Activated B cell treated with CpG ODN at 0.5 μM for 24 hours (primary cell): ENCODE measurements at regions of chr2 and their contacts with region 1.

Region 1: DNA sequence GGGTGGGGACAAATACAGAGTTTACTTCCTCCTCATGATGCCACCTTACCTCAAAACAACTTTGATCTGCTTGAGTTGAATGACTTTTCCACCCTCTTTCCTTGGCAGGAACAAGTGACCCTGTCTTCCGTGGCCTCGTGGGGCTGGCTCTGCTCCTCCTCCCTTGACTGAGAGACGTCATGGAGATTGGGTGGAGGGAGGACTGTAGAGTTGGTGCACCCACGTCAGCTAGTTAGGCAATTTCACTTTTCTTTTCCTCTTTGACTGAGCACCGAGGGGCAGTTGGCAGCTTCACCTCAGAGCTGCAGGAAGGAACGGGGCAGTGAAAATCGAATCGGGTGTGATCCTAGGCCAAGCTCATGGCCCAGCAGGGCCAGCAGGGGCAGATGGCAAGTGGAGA is at the start of gene SP140:
- DNase-seq: peak; percentile 55
- ATAC-seq: peak; percentile 74
- H3K4me3 Mint-ChIP-seq: peak within 1 kb of the TSS; percentile 92
- H3K27ac Mint-ChIP-seq: peak within 1 kb of the TSS; percentile 98
- H3K4me1 Mint-ChIP-seq: peaks cover 86% of the 10 kb centered on the region
- H3K27me3 Mint-ChIP-seq: no peaks in the 10 kb centered on the region
- CTCF ChIP-seq: no peak
- total RNA-seq, gene SP140: 295 and 330 TPM in 2 replicates

Region 2: DNA sequence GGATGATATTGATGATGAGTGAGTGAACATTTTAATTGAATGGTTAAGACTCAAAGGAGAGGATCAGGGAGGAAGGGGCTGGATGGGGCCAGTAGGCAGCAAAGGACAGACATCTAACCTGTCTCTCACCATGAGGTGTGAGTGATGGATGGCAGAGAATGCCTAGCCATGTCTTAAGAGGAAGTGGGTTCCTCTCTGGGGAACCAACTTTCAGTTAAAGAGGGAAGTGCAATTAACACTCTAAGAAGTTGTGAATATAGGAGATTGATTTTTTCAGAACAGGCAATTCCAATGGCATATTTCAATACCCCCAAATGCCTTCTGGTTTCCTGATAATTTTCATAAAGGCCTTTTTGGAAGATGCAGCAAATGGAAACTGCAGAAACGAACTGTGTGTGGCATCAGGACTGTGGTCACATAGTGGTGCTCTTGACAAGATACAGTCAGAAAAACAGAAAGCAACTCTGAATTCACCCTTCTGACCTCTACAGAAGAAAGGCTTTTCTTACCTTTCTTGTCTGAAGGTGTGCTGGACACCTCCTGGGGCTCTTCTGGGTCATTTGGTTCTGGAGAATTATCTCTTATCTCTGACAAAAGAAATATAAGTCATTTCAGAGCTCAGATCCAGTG is 15.9 kb before region 1 on chr2:
- CTCF ChIA-PET with region 1: interaction called, 17 read pairs
- POLR2A ChIA-PET with region 1: interaction called, 268 read pairs
- intact Hi-C with region 1: loop called (anchors 1 kb)
- DNase-seq: no peak
- ATAC-seq: peak; percentile 85
- H3K4me3 Mint-ChIP-seq: no peak overlapping the region
- H3K27ac Mint-ChIP-seq: no peak overlapping the region
- H3K4me1 Mint-ChIP-seq: peaks cover 37% of the 10 kb centered on the region
- H3K27me3 Mint-ChIP-seq: no peaks in the 10 kb centered on the region
- CTCF ChIP-seq: no peak

Region 3: GRCh38 chr2:230262246-230262645 is 36.8 kb after region 1 on chr2:
- CTCF ChIA-PET with region 1: no interaction called
- POLR2A ChIA-PET with region 1: interaction called, 38 read pairs
- intact Hi-C with region 1: loop called (anchors 1 kb)
- DNase-seq: no peak
- ATAC-seq: no peak
- H3K4me3 Mint-ChIP-seq: peak overlapping the region; percentile 39
- H3K27ac Mint-ChIP-seq: peak overlapping the region; percentile 81
- H3K4me1 Mint-ChIP-seq: peaks cover 92% of the 10 kb centered on the region
- H3K27me3 Mint-ChIP-seq: no peaks in the 10 kb centered on the region
- CTCF ChIP-seq: no peak

Region 4: DNA sequence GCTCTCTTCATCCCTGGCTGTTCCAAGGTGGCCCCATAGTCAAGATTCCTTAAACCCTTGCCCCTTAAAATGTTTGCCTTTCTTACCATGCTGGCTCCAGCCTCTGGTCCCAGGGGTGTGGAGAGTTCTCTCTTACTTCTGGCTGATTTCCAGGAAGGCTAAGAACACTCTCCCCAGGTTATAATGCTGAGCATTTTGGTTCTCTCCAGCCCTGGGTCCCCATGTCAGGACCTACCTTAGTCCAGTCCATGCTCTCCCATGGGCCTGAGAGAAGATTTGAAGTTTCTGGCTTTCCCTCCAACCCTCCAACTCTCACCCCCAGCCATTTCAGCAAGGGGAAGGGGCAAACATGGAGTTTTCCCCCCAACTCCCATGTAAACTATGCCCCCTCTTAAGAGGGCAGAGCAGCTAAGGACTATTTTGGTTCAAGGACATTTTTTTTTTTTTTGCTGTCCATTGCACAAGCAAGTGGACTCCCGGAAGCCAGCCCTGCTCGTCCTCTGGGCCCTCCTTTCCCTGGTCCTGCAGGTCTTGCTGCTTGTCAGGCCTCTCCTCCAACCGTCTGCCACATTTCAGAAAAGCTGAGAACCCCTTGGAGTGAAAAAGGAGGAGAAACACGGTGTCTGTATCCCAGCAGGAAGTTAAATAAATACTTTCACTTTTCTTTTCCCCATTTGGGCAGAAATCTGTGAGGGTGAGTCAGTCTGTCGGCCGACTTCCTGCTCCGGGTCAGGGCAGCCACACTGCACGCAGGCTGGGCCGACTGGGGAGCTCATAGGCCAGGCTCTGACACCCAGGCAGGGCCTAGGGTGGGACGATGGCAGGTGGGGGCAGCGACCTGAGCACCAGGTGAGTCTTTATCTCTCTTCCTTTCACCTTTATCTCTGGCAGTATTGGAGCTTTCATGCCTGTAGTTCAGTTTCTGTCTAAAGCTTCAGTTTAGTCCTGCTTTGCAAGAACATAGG is 101.2 kb after region 1 on chr2 and contains the start of gene SP140L:
- CTCF ChIA-PET with region 1: no interaction called
- POLR2A ChIA-PET with region 1: interaction called, 20 read pairs
- intact Hi-C with region 1: no loop called
- DNase-seq: peak; percentile 60
- ATAC-seq: peak; percentile 95
- H3K4me3 Mint-ChIP-seq: peak within 1 kb of the TSS; percentile 96
- H3K27ac Mint-ChIP-seq: peak within 1 kb of the TSS; percentile 99
- H3K4me1 Mint-ChIP-seq: peaks cover 79% of the 10 kb centered on the region
- H3K27me3 Mint-ChIP-seq: no peaks in the 10 kb centered on the region
- CTCF ChIP-seq: no peak
- total RNA-seq, gene SP140L: 106 and 112 TPM in 2 replicates

Region 5: DNA sequence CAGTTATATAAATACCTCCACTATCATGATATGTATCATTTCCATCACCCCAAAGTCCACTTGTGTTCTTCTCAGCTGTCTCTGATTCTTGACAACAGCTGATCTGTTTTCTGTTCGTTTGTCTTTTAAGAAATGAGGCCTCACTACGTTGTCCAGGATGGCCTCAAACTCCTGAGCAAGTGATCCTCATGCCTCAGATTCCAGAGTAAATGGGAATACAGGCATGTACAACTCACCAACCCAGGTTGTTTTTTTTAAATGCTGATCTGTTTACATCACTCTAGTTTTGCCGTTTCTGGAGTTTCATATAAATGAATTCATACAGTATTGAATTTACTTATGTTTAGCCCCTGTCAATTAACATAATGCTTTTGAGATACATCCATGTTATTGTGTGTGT is 151.6 kb after region 1 on chr2:
- CTCF ChIA-PET with region 1: no interaction called
- POLR2A ChIA-PET with region 1: no interaction called
- intact Hi-C with region 1: no loop called
- DNase-seq: no peak
- ATAC-seq: no peak
- H3K4me3 Mint-ChIP-seq: no peak overlapping the region
- H3K27ac Mint-ChIP-seq: no peak overlapping the region
- H3K4me1 Mint-ChIP-seq: no peaks in the 10 kb centered on the region
- H3K27me3 Mint-ChIP-seq: no peaks in the 10 kb centered on the region
- CTCF ChIP-seq: no peak

Region 6: GRCh38 chr2:230658877-230659652 is 433.6 kb after region 1 on chr2:
- CTCF ChIA-PET with region 1: no interaction called
- POLR2A ChIA-PET with region 1: interaction called, 3 read pairs
- intact Hi-C with region 1: loop called (anchors 5 kb)
- DNase-seq: no peak
- ATAC-seq: peak; percentile 20
- H3K4me3 Mint-ChIP-seq: peak overlapping the region; percentile 5
- H3K27ac Mint-ChIP-seq: peak overlapping the region; percentile 42
- H3K4me1 Mint-ChIP-seq: peaks cover 74% of the 10 kb centered on the region
- H3K27me3 Mint-ChIP-seq: no peaks in the 10 kb centered on the region
- CTCF ChIP-seq: no peak